Right ventricle myocardium inferior (tissue), 1 donor: ENCODE measurements at regions of chr2 and their contacts with region 1.

Region 1: GRCh38 chr2:42047488-42048298 is at the start of gene PKDCC:
- DNase-seq: peak; percentile 93
- ATAC-seq: peak; percentile 89
- total RNA-seq, gene PKDCC: 114 TPM

Region 2: DNA sequence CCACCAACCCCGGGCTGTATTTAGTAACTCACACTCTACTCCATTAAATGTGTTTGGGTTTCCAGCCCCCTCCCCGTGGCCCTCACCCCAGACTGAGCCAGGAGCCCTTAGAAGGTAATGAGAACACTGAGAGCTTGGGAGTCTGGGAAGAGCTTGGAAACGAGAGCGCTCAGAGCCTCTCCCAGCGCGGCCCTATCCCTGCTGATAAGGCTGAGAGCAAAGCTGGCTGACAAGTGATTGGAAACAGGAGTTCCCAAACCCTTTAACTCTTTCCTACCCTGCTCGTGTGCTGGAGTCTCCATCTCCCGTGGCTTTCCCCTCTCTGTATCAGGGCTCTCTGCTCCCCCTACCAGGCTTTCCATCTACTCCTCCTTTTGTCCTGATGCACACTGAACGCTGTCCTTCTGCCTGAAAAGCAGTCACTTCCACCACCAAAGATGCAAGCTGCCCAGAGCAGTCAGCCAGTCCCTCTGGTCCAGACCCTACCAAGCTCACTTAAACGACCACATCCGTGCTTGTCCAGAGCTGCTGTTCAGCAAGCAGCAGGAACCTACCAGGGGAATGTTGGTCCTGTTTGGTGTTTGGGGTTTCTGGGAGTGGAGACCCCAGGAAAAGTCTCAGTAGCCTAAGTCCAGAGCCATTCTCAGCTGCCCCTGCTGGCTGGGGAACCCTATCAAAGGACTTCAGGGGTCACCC is 99.8 kb before region 1 on chr2:
- intact Hi-C with region 1: loop called (anchors 5 kb)
- DNase-seq: peak; percentile 83
- ATAC-seq: peak; percentile 93

Region 3: DNA sequence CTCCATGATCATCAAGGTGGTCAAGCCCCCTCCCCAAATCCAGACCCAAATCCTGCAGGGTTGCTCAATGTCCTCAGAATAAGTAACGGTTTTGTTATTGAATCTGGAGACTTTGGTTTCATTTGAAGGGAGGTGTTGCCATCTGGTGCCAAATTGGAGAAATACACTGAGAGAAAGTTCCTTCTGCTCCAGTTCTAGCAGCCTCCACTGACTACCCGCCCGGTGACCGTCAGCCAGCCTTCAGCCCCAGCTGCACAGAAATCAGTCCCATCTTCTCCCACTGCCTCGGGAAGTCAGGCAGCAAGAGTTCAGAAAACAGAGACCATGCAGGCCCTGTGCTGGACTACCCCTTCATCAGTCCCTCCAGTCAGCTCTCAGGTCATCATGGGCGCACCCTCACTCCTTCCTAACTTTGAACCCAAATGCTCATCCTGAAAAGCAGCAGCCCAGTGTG is 38.8 kb after region 1 on chr2:
- intact Hi-C with region 1: loop called (anchors 5 kb)
- DNase-seq: no peak
- ATAC-seq: peak; percentile 53